ENCODE measurements at regions of chr17 and their contacts with region 1.

Region 1: DNA sequence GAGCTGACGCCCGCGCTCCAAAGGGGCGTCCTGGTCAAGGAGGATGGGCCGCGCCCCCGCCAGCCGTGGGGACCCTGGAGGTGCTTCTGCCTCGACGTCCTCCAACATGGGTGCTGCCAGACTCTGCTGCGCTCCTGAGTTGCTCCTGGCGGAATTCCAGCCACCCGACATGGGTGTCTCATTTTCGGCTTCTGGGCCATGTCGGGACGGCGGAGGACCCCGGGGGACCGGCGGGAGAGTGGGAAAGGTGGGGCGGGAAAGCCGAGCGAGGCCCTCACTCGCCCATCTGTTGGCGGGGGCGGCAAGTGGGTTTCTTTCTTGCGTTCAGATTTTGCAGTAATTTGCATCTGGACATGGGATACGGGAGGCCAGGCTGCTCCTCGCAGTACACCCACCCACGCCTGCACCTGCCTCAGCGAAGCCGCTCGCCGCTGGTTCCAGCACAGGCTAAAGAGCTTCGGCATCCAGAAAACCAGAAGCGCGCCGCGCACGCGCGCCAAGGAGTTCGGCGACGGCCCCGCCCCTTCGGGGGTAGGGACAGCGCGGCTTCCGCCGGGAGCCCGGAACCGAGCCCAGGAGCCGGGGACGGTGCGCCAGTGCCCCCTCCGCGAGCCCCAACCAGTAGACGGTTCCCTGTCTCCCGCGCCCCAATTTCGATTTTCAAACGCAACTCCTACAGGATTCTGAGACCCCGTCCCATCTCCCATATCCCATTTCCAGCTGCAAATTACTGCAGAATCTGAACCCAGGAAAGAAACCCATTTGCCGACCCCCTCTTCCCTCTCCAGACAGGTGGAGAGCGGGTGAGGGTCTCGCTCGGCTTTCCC is at the start of gene ARMC7:
- DNase-seq: no peak
- H3K4me3 ChIP-seq: peak within 1 kb of the TSS; percentile 86 to 95
- H3K27ac ChIP-seq: peak within 1 kb of the TSS; percentile 87
- H3K4me1 ChIP-seq: peaks cover 34% of the 10 kb centered on the region
- H3K27me3 ChIP-seq: no peaks in the 10 kb centered on the region
- CTCF ChIP-seq: no peak
- POLR2A ChIP-seq: peak in 1 of 2 donors; percentile 62
- total RNA-seq, gene ARMC7: 12.8 TPM

Region 2: GRCh38 chr17:75199886-75200618 is 90.4 kb after region 1 on chr17:
- intact Hi-C with region 1: loop called (anchors 5 kb)
- DNase-seq: no peak
- H3K4me3 ChIP-seq: no peak overlapping the region
- H3K27ac ChIP-seq: no peak overlapping the region
- H3K4me1 ChIP-seq: peaks cover 6% of the 10 kb centered on the region
- H3K27me3 ChIP-seq: no peaks in the 10 kb centered on the region
- CTCF ChIP-seq: no peak
- POLR2A ChIP-seq: no peak

Region 3: GRCh38 chr17:75864448-75864871 is 754.8 kb after region 1 on chr17:
- intact Hi-C with region 1: loop called (anchors 10 kb)
- DNase-seq: peak in 1 of 2 donors; percentile 93
- H3K4me3 ChIP-seq: no peak overlapping the region
- H3K27ac ChIP-seq: peak overlapping the region; percentile 75
- H3K4me1 ChIP-seq: peaks cover 51% of the 10 kb centered on the region
- H3K27me3 ChIP-seq: no peaks in the 10 kb centered on the region
- CTCF ChIP-seq: no peak
- POLR2A ChIP-seq: no peak